IMR-90 (cell line): ENCODE measurements at regions of chr15 and their contacts with region 1.

Region 1: GRCh38 chr15:31488426-31489204 is 162.0 kb downstream of the KLF13 start:
- DNase-seq: peak; percentile 91
- ATAC-seq: peak; percentile 86
- H3K4me3 ChIP-seq: no peak overlapping the region
- H3K27ac ChIP-seq: no peak overlapping the region
- H3K4me1 ChIP-seq: peaks cover 2% of the 10 kb centered on the region
- H3K27me3 ChIP-seq: peaks cover 8% of the 10 kb centered on the region; the same call in 1 of the 2 replicates
- CTCF ChIP-seq: peak; percentile 99
- POLR2A ChIP-seq: no peak
- RAD21 ChIP-seq: peak; percentile 94

Region 2: GRCh38 chr15:30903497-30904201 is 585.0 kb before region 1 on chr15 and contains the start of gene FAN1:
- CTCF ChIA-PET with region 1: no interaction called
- POLR2A ChIA-PET with region 1: no interaction called
- dilution Hi-C with region 1: no loop called
- in situ Hi-C with region 1: no loop called
- intact Hi-C with region 1: loop called (anchors 10 kb)
- DNase-seq: peak; percentile 84
- ATAC-seq: peak; percentile 99
- H3K4me3 ChIP-seq: peak within 1 kb of the TSS; percentile 69
- H3K27ac ChIP-seq: peak within 1 kb of the TSS; percentile 54
- H3K4me1 ChIP-seq: no peaks in the 10 kb centered on the region
- H3K27me3 ChIP-seq: no peaks in the 10 kb centered on the region
- CTCF ChIP-seq: no peak
- POLR2A ChIP-seq: no peak
- RAD21 ChIP-seq: no peak
- total RNA-seq, gene FAN1: 12.4 and 15.0 TPM in 2 replicates

Region 3: DNA sequence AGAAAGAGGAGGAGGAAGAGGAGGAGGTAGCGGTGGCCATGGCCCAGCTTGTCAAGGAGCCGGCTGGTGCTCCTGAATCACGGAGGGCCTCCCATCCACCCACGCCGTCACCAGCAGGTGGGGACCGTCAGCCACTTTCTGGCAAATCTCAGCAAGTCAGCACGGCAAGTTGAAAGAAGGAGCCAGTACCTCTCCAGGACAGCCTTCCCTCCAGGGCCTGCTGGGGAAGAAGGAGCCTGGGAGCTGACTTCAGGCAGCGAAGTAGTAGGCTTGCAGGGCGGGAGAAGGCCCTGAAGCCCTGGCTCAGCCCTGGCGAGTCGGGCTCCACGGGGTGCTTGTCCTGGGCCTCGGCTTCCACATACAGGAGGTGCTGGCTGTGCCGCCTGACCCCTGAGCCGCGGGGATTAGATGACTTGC is 287.9 kb before region 1 on chr15:
- CTCF ChIA-PET with region 1: interaction called, 10 read pairs
- POLR2A ChIA-PET with region 1: no interaction called
- dilution Hi-C with region 1: no loop called
- in situ Hi-C with region 1: no loop called
- intact Hi-C with region 1: loop called (anchors 1 kb)
- DNase-seq: peak; percentile 39
- ATAC-seq: peak; percentile 77
- H3K4me3 ChIP-seq: no peak overlapping the region
- H3K27ac ChIP-seq: no peak overlapping the region
- H3K4me1 ChIP-seq: no peaks in the 10 kb centered on the region
- H3K27me3 ChIP-seq: peaks cover 39% of the 10 kb centered on the region
- CTCF ChIP-seq: peak; percentile 43
- POLR2A ChIP-seq: no peak
- RAD21 ChIP-seq: peak; percentile 60

Region 4: GRCh38 chr15:31252171-31252785 is 236.3 kb before region 1 on chr15:
- CTCF ChIA-PET with region 1: no interaction called
- POLR2A ChIA-PET with region 1: no interaction called
- dilution Hi-C with region 1: no loop called
- in situ Hi-C with region 1: no loop called
- intact Hi-C with region 1: no loop called
- DNase-seq: no peak
- ATAC-seq: no peak
- H3K4me3 ChIP-seq: no peak overlapping the region
- H3K27ac ChIP-seq: no peak overlapping the region
- H3K4me1 ChIP-seq: no peaks in the 10 kb centered on the region
- H3K27me3 ChIP-seq: peaks cover 27% of the 10 kb centered on the region
- CTCF ChIP-seq: no peak
- POLR2A ChIP-seq: no peak
- RAD21 ChIP-seq: no peak

Region 5: GRCh38 chr15:31326156-31326732 is 162.4 kb before region 1 on chr15:
- CTCF ChIA-PET with region 1: no interaction called
- POLR2A ChIA-PET with region 1: no interaction called
- dilution Hi-C with region 1: no loop called
- in situ Hi-C with region 1: loop called (anchors 10 kb)
- intact Hi-C with region 1: loop called (anchors 1 kb)
- DNase-seq: peak; percentile 97
- ATAC-seq: peak; percentile 91
- H3K4me3 ChIP-seq: peak overlapping the region; percentile 86
- H3K27ac ChIP-seq: peak overlapping the region; percentile 92
- H3K4me1 ChIP-seq: peaks cover 7% of the 10 kb centered on the region
- H3K27me3 ChIP-seq: peaks cover under 1% of the 10 kb centered on the region; the same call in 1 of the 2 replicates
- CTCF ChIP-seq: no peak; the same call in 1 of the 2 replicates
- POLR2A ChIP-seq: peak; percentile 89; the same call in 1 of the 2 replicates
- RAD21 ChIP-seq: no peak

Region 6: DNA sequence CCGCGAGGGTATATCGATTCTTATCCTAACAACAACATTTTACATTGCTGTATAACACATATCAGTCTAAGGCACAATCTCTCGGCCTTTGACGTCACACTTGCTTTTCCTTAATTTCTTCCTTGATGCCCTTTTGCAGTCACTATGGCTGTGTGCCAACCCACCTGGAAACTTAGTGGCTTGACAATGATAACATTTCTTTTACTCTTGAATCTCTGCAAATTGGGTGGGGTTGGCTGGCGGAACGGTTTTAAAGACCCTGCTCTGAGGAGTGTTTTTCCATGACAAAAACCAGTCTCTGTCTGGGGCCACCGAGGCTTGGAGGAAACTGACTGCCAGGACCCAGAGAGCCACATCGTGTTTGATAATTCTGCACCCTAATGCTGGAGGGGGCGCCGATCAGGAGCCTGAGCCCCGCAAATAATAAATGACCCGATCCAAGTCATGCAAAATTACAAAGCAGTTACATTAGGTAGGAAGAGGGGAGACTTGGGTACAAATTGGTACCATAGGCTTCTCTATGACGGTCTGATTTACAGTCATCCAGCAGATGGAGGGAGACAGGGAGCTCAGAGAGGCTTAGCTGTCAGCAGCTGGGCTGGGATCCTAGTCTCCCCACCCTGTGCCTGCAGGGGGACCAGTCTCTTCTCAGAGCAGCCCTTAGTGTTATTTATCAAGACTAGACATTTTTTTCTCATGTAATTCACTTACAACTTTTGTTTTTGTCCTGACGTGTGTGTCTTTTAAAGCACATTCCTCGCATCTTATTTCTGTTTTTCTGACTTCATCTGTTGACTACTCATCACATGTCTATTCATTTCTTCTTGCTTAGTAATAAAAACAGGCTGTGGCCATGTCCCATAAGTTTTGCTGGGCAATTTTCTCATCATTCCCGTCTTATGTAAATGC is 46.2 kb before region 1 on chr15:
- CTCF ChIA-PET with region 1: interaction called, 4 read pairs
- POLR2A ChIA-PET with region 1: no interaction called
- dilution Hi-C with region 1: no loop called
- in situ Hi-C with region 1: no loop called
- intact Hi-C with region 1: loop called (anchors 1 kb)
- DNase-seq: peak; percentile 95
- ATAC-seq: peak; percentile 75
- H3K4me3 ChIP-seq: no peak overlapping the region
- H3K27ac ChIP-seq: peak overlapping the region; percentile 13; the same call in 1 of the 2 replicates
- H3K4me1 ChIP-seq: peaks cover 22% of the 10 kb centered on the region
- H3K27me3 ChIP-seq: no peaks in the 10 kb centered on the region
- CTCF ChIP-seq: peak; percentile 49; the same call in 1 of the 2 replicates
- POLR2A ChIP-seq: 0 out of 2 replicates have a peak, but pooled peaks have one; percentile 14
- RAD21 ChIP-seq: peak; percentile 34; the same call in 1 of the 2 replicates

Region 7: DNA sequence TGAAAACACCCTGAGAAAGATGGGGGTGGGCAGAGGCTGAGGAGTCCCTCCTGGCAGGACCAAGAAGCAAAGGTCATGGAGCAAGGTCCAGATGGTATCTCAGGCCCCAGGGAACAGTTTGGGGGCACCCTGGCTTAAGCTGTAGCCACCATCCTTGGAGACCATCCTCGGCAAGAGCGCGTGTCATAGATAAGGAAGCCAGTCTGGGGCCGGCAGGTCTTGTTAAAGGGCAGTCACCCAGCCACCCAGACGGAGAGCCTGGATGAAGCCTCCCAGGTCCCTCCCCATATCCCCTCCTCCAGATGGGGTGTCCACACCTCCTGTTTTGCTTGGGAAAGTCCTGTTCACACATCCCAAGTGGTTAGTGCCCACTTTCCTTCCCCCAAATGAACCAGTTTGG is 29.1 kb after region 1 on chr15:
- CTCF ChIA-PET with region 1: no interaction called
- POLR2A ChIA-PET with region 1: no interaction called
- dilution Hi-C with region 1: no loop called
- in situ Hi-C with region 1: no loop called
- intact Hi-C with region 1: no loop called
- DNase-seq: no peak
- ATAC-seq: no peak
- H3K4me3 ChIP-seq: no peak overlapping the region
- H3K27ac ChIP-seq: no peak overlapping the region
- H3K4me1 ChIP-seq: no peaks in the 10 kb centered on the region
- H3K27me3 ChIP-seq: peaks cover 4% of the 10 kb centered on the region
- CTCF ChIP-seq: no peak
- POLR2A ChIP-seq: no peak
- RAD21 ChIP-seq: no peak

Region 8: DNA sequence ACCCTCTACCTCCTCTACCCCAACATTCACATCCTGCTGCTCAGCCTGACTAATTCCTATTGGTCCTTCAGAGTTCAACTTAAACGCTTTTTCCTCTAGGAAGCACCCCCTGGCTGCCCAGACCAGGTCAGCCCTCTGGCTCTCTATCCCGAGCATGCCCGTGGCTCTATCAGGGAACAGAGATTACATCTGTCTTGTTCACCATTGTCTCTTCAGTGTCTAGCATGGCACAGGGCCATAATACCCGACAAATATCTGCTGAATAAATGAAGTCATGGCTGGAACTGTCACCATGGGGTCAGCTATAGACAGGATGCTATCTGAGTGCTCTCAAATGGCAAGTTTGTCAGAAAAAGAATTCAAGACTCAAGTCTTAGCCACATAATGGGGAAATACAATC is 244.8 kb after region 1 on chr15:
- CTCF ChIA-PET with region 1: no interaction called
- POLR2A ChIA-PET with region 1: no interaction called
- dilution Hi-C with region 1: no loop called
- in situ Hi-C with region 1: no loop called
- intact Hi-C with region 1: no loop called
- DNase-seq: no peak
- ATAC-seq: no peak
- H3K4me3 ChIP-seq: no peak overlapping the region
- H3K27ac ChIP-seq: no peak overlapping the region
- H3K4me1 ChIP-seq: no peaks in the 10 kb centered on the region
- H3K27me3 ChIP-seq: no peaks in the 10 kb centered on the region
- CTCF ChIP-seq: no peak
- POLR2A ChIP-seq: no peak
- RAD21 ChIP-seq: no peak

Region 9: GRCh38 chr15:31782016-31782770 is 293.6 kb after region 1 on chr15:
- CTCF ChIA-PET with region 1: no interaction called
- POLR2A ChIA-PET with region 1: no interaction called
- dilution Hi-C with region 1: no loop called
- in situ Hi-C with region 1: no loop called
- intact Hi-C with region 1: no loop called
- DNase-seq: no peak
- ATAC-seq: no peak
- H3K4me3 ChIP-seq: no peak overlapping the region
- H3K27ac ChIP-seq: no peak overlapping the region
- H3K4me1 ChIP-seq: no peaks in the 10 kb centered on the region
- H3K27me3 ChIP-seq: no peaks in the 10 kb centered on the region
- CTCF ChIP-seq: no peak
- POLR2A ChIP-seq: no peak
- RAD21 ChIP-seq: no peak